ENCODE measurements at regions of chr6 and their contacts with region 1.

Region 1: DNA sequence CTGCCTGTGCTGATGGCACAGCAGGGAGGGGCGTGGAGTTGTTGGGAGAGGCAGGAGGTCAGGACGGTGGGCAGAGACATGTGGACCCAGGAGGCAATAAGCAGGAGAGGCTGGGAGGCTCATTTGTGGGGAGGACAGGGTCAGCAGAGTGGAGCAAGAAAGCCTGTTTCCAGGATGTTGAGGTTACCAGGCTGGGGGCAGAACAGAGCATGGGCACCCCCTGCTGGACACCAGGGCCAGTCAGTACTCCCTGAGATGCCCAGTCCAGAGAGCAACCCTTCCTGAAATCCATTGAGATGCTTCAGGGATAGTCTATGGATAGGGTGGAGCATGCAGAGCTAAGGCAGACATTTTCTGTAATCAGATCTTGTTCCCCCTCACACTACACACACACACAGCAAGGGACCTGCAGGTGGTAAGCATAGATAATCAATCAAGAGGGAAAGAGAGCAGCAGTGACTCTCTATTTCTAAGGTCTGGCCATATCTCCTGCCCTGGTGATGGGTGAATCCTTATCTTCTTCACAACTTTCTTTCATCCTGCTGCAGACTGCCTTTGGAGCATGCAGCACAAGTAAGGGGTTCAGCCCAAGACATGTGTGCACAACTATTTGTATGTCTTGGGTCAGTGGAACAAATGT is 41.7 kb downstream of the MOCS1 start:
- DNase-seq: peak; percentile 17 to 83
- H3K4me3 ChIP-seq: no peak overlapping the region
- H3K27ac ChIP-seq: no peak overlapping the region
- H3K4me1 ChIP-seq: peaks cover 0 to 6% (median 2%) of the 10 kb centered on the region in 4 experiments; a peak in 2 of 7 replicates
- H3K27me3 ChIP-seq: no peaks in the 10 kb centered on the region
- CTCF ChIP-seq: peak; percentile 82 to 95 (median 91)
- EP300 ChIP-seq: no peak
- POLR2A ChIP-seq: no peak
- RAD21 ChIP-seq: peak; percentile 91 to 92

Region 2: GRCh38 chr6:39377539-39377950 is 515.1 kb before region 1 on chr6:
- CTCF ChIA-PET with region 1: interaction called, 53 read pairs
- POLR2A ChIA-PET with region 1: no interaction called
- DNase-seq: peak; percentile 60 to 76
- H3K4me3 ChIP-seq: no peak overlapping the region
- H3K27ac ChIP-seq: no peak overlapping the region
- H3K4me1 ChIP-seq: peaks cover 0 to 3% (median under 1%) of the 10 kb centered on the region in 4 experiments; a peak in 2 of 7 replicates
- H3K27me3 ChIP-seq: no peaks in the 10 kb centered on the region; a peak in 1 of 7 replicates
- CTCF ChIP-seq: peak; percentile 63 to 91 (median 90)
- EP300 ChIP-seq: no peak
- POLR2A ChIP-seq: no peak
- RAD21 ChIP-seq: peak; percentile 99 to 100

Region 3: DNA sequence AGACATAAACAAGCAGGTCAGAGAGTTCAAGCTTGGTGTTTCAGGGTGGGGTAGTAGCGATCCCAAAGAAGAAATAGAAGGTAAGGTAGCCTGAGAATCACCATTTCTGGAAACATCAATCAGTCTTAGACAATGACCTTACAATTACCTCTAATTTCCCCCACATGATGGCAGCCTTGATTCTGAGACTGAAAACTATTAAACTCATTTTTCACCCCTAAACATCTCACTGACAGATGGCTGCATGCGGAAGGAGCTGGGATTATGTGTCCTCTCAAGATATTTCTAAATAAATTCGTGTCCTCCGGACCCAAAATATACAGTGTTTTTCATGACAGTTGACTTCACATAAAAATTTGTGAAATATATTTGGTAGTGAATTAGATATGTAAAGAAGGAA is 228.4 kb before region 1 on chr6:
- CTCF ChIA-PET with region 1: no interaction called
- POLR2A ChIA-PET with region 1: no interaction called
- DNase-seq: no peak
- H3K4me3 ChIP-seq: no peak overlapping the region
- H3K27ac ChIP-seq: no peak overlapping the region
- H3K4me1 ChIP-seq: no peaks in the 10 kb centered on the region; a peak in 1 of 7 replicates
- H3K27me3 ChIP-seq: no peaks in the 10 kb centered on the region
- CTCF ChIP-seq: no peak; a peak in 1 of 4 replicates
- EP300 ChIP-seq: no peak
- POLR2A ChIP-seq: no peak
- RAD21 ChIP-seq: peak; percentile 16 to 19; a peak in 2 of 4 replicates

Region 4: DNA sequence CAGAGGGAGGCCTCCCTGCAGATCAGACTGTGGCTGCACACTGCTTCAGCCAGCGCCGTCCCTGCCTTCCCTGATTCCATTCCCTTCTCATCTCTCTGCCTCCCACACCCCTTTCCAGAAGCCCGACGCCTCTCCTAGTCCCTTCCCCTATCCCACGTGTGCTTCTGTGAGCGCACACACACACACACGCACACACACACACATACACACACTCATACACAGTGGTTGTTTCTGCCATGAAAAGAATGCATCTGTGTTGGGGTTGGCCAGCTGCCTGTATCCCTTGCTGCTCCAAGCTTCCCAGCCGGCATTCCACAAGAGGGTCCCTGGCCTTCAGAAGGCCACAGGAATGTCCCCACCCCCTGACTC is 10.1 kb before region 1 on chr6:
- CTCF ChIA-PET with region 1: interaction called, 135 read pairs
- POLR2A ChIA-PET with region 1: no interaction called
- DNase-seq: no peak
- H3K4me3 ChIP-seq: no peak overlapping the region
- H3K27ac ChIP-seq: no peak overlapping the region
- H3K4me1 ChIP-seq: no peaks in the 10 kb centered on the region
- H3K27me3 ChIP-seq: no peaks in the 10 kb centered on the region
- CTCF ChIP-seq: no peak
- EP300 ChIP-seq: no peak
- POLR2A ChIP-seq: no peak
- RAD21 ChIP-seq: no peak

Region 5: GRCh38 chr6:39904946-39905639 is 12.5 kb after region 1 on chr6:
- CTCF ChIA-PET with region 1: interaction called, 30 read pairs
- POLR2A ChIA-PET with region 1: interaction called, 5 read pairs
- DNase-seq: no peak
- H3K4me3 ChIP-seq: no peak overlapping the region
- H3K27ac ChIP-seq: no peak overlapping the region
- H3K4me1 ChIP-seq: peaks cover 0 to 2% (median 0%) of the 10 kb centered on the region in 4 experiments; a peak in 1 of 7 replicates
- H3K27me3 ChIP-seq: 0 out of 7 replicates have a peak, but pooled peaks cover 0 to 2% (median 0%) of the 10 kb centered on the region in 4 experiments
- CTCF ChIP-seq: peak in 2 of 3 experiments; percentile 14 to 17; a peak in 1 of 4 replicates
- EP300 ChIP-seq: no peak
- POLR2A ChIP-seq: no peak
- RAD21 ChIP-seq: no peak; a peak in 1 of 4 replicates

Region 6: GRCh38 chr6:40599555-40599954 is 706.9 kb after region 1 on chr6:
- CTCF ChIA-PET with region 1: no interaction called
- POLR2A ChIA-PET with region 1: no interaction called
- DNase-seq: no peak
- H3K4me3 ChIP-seq: no peak overlapping the region
- H3K27ac ChIP-seq: no peak overlapping the region
- H3K4me1 ChIP-seq: no peaks in the 10 kb centered on the region
- H3K27me3 ChIP-seq: no peaks in the 10 kb centered on the region
- CTCF ChIP-seq: no peak
- EP300 ChIP-seq: no peak
- POLR2A ChIP-seq: no peak
- RAD21 ChIP-seq: no peak